PC-3 (cell line): ENCODE measurements at regions of chr10 and their contacts with region 1.

Region 1: GRCh38 chr10:17029581-17030271 is 99.9 kb downstream of the CUBN start:
- DNase-seq: peak; percentile 68
- ATAC-seq: peak; percentile 70
- H3K4me3 ChIP-seq: peak overlapping the region; percentile 48; the same call in 1 of the 2 replicates
- H3K27ac ChIP-seq: peak overlapping the region; percentile 94
- H3K4me1 ChIP-seq: peaks cover 38% of the 10 kb centered on the region
- H3K27me3 ChIP-seq: no peaks in the 10 kb centered on the region
- CTCF ChIP-seq: no peak

Region 2: DNA sequence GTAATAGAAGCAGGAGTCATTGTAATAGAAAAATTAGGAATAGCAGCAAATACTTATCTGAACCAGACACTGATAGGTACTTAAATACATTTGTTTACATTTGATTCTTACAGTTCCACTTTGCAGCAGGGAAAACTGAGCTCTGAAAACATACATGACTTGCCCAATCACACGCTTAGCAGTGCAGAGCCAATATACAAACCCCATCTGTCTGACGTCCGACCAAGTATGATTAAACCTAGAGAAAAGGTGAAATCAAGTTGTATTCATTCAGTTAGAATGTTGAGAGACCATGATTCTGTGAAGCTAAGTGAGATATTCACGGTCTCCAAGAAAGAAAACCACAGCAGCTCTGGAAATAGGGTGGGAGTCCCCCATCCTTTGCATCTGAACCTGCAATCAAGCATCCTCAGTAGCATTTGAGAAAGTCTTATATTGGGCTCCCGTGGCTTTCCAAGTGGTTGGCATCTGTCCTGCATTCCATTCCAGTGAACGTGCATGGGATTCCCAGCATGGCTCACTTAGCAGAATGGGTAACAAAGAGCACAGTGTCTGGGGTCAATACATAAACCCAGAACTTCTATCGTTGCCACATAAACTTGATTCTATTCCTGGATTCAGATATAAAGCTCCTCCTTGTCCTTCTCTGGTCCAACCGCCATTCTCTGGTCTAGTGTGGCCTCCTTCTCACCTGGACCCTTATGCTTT is 63.8 kb before region 1 on chr10:
- CTCF ChIA-PET with region 1: no interaction called
- POLR2A ChIA-PET with region 1: no interaction called
- intact Hi-C with region 1: loop called (anchors 5 kb)
- DNase-seq: peak; percentile 91
- ATAC-seq: peak; percentile 90
- H3K4me3 ChIP-seq: no peak overlapping the region
- H3K27ac ChIP-seq: peak overlapping the region; percentile 89
- H3K4me1 ChIP-seq: peaks cover 33% of the 10 kb centered on the region
- H3K27me3 ChIP-seq: no peaks in the 10 kb centered on the region
- CTCF ChIP-seq: no peak

Region 3: GRCh38 chr10:16986406-16987205 is 43.1 kb before region 1 on chr10:
- CTCF ChIA-PET with region 1: no interaction called
- POLR2A ChIA-PET with region 1: no interaction called
- intact Hi-C with region 1: loop called (anchors 5 kb)
- DNase-seq: peak; percentile 75
- ATAC-seq: peak; percentile 83
- H3K4me3 ChIP-seq: no peak overlapping the region
- H3K27ac ChIP-seq: peak overlapping the region; percentile 82
- H3K4me1 ChIP-seq: peaks cover 23% of the 10 kb centered on the region
- H3K27me3 ChIP-seq: no peaks in the 10 kb centered on the region
- CTCF ChIP-seq: no peak